ENCODE measurements at regions of chr12 and their contacts with region 1.

Region 1: DNA sequence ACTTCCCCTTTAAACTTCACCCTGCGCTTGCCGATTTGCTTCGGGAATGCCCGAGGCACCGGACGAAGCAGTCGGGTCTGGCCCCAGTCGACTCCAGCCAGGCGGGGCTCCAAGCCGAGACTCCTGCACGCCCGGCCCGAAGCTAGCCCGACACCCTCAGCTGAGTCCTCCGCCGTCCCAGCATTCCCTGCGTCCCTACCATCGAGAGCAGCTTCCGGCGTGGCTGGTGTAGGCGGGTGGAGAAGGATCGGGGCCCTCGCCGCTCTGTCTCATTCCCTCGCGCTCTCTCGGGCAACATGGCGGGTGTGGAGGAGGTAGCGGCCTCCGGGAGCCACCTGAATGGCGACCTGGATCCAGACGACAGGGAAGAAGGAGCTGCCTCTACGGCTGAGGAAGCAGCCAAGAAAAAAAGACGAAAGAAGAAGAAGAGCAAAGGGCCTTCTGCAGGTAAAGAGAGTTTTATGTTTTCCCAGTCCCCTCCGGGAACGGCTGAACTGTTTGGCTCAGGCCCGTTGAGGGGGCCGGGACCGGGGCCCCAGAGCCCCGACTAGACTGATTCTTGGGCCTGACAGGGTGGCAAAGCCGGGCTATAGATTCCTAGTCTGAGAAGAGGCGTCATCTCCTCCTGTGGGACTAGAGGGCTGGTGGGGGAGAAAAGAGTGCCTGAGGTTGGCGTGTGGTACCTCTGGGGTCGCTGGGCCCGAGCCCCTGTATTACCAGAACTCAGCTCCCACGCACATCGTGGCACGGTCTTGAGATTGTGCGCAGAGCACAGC is at the start of gene METAP2:
- DNase-seq: peak; percentile 96
- H3K4me3 Mint-ChIP-seq: peak within 1 kb of the TSS; percentile 96
- H3K27ac Mint-ChIP-seq: peak within 1 kb of the TSS; percentile 98
- H3K4me1 Mint-ChIP-seq: peaks cover 42% of the 10 kb centered on the region
- H3K27me3 Mint-ChIP-seq: no peaks in the 10 kb centered on the region
- total RNA-seq, gene METAP2: 108 to 110 TPM

Region 2: DNA sequence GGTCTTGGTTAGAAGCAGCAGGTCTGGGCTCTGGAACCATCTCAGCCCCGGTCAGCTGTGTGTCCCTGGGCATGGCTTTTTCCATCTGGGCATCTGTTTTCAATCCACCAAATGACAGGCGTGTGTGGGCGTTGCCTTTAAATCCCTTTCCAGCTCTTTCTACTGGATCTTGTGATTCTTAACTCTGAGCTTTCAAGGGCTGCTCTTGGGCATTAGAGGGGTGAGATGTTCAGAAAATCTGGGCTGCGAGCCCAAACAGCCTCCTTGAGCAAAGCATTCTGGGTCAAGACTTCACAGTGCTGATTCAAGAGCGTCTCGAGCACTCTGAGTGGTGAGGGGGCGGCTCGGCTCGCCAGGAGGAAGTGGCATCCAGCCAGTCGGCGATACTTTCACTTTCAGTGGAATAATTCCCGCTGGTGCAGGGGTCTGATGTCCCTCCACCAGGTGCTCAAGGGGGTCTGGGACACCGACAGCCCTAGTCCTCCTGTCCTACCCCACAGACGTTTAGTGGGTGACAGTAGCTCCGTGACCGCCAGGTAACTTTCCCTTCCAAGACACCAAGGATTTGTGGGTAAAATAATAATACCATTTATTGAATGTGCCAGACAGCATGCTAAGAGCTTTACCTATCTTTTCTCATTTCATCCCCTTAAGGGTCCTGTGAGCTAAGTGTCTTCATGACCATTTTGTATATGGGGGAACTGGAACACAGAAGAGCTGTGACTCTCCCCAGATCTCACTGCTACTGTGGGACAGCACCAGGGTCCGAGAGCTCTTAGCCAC is 1211.7 kb before region 1 on chr12:
- CTCF ChIA-PET with region 1: no interaction called
- intact Hi-C with region 1: loop called (anchors 5 kb)
- DNase-seq: peak; percentile 83
- H3K4me3 Mint-ChIP-seq: peak overlapping the region; percentile 89
- H3K27ac Mint-ChIP-seq: peak overlapping the region; percentile 96
- H3K4me1 Mint-ChIP-seq: peaks cover 31% of the 10 kb centered on the region
- H3K27me3 Mint-ChIP-seq: no peaks in the 10 kb centered on the region

Region 3: GRCh38 chr12:95072900-95073697 is 401.0 kb before region 1 on chr12 and contains the start of gene NR2C1:
- CTCF ChIA-PET with region 1: no interaction called
- intact Hi-C with region 1: loop called (anchors 1 kb)
- DNase-seq: peak; percentile 95
- H3K4me3 Mint-ChIP-seq: peak within 1 kb of the TSS; percentile 92
- H3K27ac Mint-ChIP-seq: peak within 1 kb of the TSS; percentile 63
- H3K4me1 Mint-ChIP-seq: peaks cover 19% of the 10 kb centered on the region
- H3K27me3 Mint-ChIP-seq: no peaks in the 10 kb centered on the region
- total RNA-seq, gene NR2C1: 19.8 to 24.6 TPM

Region 4: GRCh38 chr12:95336390-95337067 is 137.5 kb before region 1 on chr12:
- CTCF ChIA-PET with region 1: no interaction called
- intact Hi-C with region 1: loop called (anchors 1 kb)
- DNase-seq: no peak
- H3K4me3 Mint-ChIP-seq: no peak overlapping the region
- H3K27ac Mint-ChIP-seq: no peak overlapping the region
- H3K4me1 Mint-ChIP-seq: peaks cover 5% of the 10 kb centered on the region
- H3K27me3 Mint-ChIP-seq: no peaks in the 10 kb centered on the region

Region 5: DNA sequence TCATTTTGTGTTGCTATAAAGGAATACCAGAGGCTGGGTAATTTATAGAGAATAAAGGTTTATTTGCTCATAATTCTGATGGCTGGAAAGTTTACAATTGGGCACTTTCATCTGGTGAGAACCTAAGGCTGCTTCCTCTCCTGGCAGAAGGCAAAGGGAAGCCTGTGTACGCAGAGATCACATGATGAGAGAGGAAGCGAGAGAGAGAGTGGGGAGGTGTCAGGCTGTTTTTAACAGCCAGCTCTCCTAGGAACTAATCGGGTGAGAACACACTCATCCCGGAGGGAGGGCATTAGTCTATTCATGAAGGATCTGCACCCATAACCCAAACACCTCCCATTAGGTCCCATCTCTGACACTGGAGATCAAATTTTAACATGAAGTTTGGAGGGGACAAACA is 45.6 kb before region 1 on chr12:
- CTCF ChIA-PET with region 1: no interaction called
- intact Hi-C with region 1: loop called (anchors 5 kb)
- DNase-seq: peak; percentile 59
- H3K4me3 Mint-ChIP-seq: no peak overlapping the region
- H3K27ac Mint-ChIP-seq: peak overlapping the region; percentile 19
- H3K4me1 Mint-ChIP-seq: peaks cover 12% of the 10 kb centered on the region
- H3K27me3 Mint-ChIP-seq: no peaks in the 10 kb centered on the region

Region 6: DNA sequence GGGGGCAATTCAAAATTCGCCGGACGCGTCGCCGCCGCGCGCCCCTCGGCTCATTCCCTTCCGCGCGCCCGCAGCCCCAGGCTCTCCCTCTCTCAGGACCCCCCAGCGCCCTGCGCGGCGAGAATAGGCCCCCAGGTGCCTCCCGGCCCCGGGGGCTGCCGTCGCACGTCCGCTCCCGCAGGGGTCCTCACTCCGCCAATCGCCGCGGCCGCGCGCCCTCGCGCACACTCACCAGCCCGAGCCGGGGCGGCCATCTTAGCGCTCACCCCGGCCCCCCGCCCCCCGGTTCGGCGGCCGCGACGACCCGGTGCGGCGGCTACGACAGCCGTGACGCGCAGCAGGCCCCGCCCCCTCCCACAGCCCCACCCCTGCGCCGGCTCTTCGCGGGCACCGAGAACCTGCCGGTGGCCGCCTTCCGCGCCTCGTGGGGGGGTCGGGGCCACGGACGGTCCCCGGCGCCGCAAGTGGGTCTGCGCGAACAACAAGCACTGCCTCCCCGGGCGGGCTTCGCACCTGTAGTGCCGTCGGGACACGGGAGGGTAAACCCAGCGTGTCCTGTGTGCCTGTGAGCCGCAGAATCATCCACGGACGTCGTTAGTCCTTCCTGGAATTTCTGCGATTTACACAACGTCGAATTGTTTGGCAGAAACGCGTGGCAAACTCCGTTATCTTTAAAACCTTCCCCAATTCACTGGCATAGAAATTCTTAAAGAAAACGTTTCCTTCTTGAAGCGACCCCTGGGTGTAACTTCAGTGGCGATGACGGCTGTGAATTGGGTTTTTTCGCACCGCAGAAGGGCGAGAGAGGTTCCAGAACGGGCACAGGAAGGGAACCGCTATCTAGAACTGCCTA is 74.7 kb after region 1 on chr12:
- CTCF ChIA-PET with region 1: no interaction called
- intact Hi-C with region 1: loop called (anchors 1 kb)
- DNase-seq: peak; percentile 75
- H3K4me3 Mint-ChIP-seq: peak overlapping the region; percentile 89
- H3K27ac Mint-ChIP-seq: peak overlapping the region; percentile 80
- H3K4me1 Mint-ChIP-seq: peaks cover 41% of the 10 kb centered on the region
- H3K27me3 Mint-ChIP-seq: no peaks in the 10 kb centered on the region

Region 7: GRCh38 chr12:95942524-95943329 is 468.7 kb after region 1 on chr12 and contains the start of gene CCDC38:
- CTCF ChIA-PET with region 1: no interaction called
- intact Hi-C with region 1: loop called (anchors 5 kb)
- DNase-seq: peak; percentile 91
- H3K4me3 Mint-ChIP-seq: peak within 1 kb of the TSS; percentile 86
- H3K27ac Mint-ChIP-seq: peak within 1 kb of the TSS; percentile 80
- H3K4me1 Mint-ChIP-seq: peaks cover 4% of the 10 kb centered on the region
- H3K27me3 Mint-ChIP-seq: no peaks in the 10 kb centered on the region
- total RNA-seq, gene CCDC38: 0.49 TPM in 1 of 2 experiments, not detected in the other